BJ (cell line): ENCODE measurements at regions of chr17 and their contacts with region 1.

Region 1: GRCh38 chr17:37047631-37048104 is 98.9 kb downstream of the AATF start:
- DNase-seq: peak; percentile 14
- H3K4me3 ChIP-seq: no peak overlapping the region
- H3K27me3 ChIP-seq: no peaks in the 10 kb centered on the region
- CTCF ChIP-seq: peak; percentile 91

Region 2: DNA sequence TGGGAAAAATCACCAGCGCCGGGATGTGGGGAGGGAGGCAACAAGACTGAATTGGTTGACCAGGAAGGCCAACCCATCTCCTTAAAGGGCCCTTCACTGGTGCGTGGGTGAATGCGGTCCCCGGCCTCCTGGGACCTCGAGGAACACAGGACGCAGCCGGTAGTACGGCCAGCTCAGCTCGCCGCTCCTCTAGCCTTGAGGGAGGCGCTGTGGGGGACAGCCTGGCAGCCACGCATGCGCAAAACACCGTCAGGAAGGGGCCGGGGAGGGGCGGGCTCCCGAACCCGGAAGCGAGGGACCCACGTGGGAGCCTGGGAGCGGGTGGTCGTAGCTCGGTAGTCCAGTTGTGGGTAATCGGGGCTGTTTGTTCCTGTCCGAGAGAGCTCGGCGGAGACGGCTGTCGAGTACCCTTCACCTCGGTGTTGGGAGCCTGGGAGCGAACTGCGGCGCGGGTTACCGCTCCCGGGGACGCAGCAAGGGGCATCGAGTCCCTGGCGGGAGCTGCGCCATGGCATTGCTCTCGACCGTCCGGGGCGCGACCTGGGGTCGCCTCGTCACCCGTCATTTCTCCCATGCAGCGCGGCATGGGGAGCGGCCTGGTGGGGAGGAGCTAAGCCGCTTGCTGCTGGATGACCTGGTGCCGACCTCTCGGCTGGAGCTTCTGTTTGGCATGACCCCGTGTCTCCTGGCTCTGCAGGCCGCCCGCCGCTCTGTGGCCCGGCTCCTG is 446.2 kb before region 1 on chr17 and contains the start of gene MRM1:
- CTCF ChIA-PET with region 1: interaction called, 42 read pairs
- POLR2A ChIA-PET with region 1: no interaction called
- DNase-seq: peak; percentile 72
- H3K4me3 ChIP-seq: peak within 1 kb of the TSS; percentile 92
- H3K27me3 ChIP-seq: no peaks in the 10 kb centered on the region
- CTCF ChIP-seq: peak; percentile 30
- polyA plus RNA-seq, gene MRM1: 3.0 and 3.9 TPM in 2 replicates

Region 3: DNA sequence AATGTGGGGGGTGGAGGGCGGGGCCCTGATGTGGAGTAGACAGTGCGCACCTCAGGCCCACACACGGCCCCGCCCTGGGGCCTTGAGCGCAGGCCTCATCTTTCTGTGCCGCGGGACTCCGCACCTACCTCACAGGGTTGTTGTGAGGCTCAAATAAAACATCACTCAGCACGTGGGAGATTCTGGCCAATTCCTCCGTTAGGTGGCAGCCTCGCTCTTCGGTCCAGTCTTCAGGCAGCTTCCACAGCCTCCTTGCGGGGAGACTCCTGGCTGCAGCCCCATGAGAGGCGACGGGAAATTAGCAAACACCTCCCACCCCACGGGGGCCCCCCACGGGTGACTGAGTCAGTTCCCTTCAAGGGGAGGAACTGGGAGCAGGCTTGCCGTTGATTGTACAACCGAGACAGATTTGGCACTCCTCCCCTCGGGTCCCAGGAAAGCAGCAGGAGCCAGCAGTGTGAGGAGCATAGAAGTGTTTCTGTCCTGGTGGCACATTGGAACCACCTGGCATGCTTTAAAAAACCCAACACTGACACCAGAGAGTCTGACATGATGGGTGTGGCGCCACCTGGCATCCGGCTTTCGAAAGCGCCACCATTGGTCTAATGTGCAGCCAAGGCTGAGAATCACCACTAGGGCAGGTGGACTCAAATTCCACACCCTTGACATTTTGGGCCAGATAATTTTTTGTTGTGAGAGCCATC is 438.7 kb before region 1 on chr17:
- CTCF ChIA-PET with region 1: interaction called, 42 read pairs
- POLR2A ChIA-PET with region 1: no interaction called
- DNase-seq: no peak
- H3K4me3 ChIP-seq: no peak overlapping the region
- H3K27me3 ChIP-seq: no peaks in the 10 kb centered on the region
- CTCF ChIP-seq: peak; percentile 61

Region 4: DNA sequence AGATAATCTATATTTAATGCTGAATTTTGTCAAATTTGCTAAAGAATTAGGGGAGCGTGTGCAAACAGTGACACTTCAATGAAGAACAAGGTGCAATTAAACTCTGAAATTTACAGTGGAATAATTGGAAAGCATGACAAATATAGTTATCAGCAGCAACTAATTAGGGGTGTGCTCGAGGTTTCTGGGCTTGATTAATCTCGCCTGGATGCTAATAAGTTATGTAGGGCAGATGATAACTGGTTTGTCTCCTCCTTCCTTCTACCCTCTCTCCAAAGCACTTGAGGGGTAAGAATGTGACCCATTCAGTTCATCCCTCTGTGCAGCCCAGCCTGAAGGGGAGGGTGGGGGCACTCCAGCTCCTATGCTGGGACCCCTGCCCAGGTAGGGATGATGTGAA is 424.4 kb before region 1 on chr17:
- CTCF ChIA-PET with region 1: interaction called, 81 read pairs
- POLR2A ChIA-PET with region 1: no interaction called
- DNase-seq: no peak
- H3K4me3 ChIP-seq: no peak overlapping the region
- H3K27me3 ChIP-seq: peaks cover 8% of the 10 kb centered on the region
- CTCF ChIP-seq: no peak

Region 5: GRCh38 chr17:36994438-36994837 is 53.2 kb before region 1 on chr17:
- CTCF ChIA-PET with region 1: interaction called, 14 read pairs
- POLR2A ChIA-PET with region 1: no interaction called
- DNase-seq: peak; percentile 25
- H3K4me3 ChIP-seq: no peak overlapping the region
- H3K27me3 ChIP-seq: no peaks in the 10 kb centered on the region
- CTCF ChIP-seq: no peak

Region 6: DNA sequence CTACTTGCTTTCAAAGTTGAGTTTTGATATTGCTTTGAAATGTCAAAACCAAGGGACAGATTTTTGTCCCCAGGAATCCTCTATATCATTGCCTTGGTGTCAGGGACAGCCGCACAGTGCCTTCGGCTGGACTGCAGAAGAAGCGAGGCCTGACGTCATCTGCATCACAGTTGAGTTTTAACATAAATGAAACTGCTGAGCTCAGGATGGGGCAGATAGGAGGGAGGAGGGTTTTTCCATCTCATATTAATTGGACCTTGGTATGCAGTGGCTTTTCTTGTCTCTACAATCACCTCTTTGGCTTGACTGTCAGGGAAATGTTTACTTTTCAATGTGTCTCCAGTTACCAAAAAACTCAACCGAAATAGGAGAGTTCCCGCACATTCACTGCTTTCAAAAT is 12.4 kb after region 1 on chr17:
- CTCF ChIA-PET with region 1: interaction called, 36 read pairs
- POLR2A ChIA-PET with region 1: interaction called, 4 read pairs
- DNase-seq: no peak
- H3K4me3 ChIP-seq: no peak overlapping the region
- H3K27me3 ChIP-seq: no peaks in the 10 kb centered on the region
- CTCF ChIP-seq: no peak